Left colon (tissue), 2 donors: ENCODE measurements at regions of chr22 and their contacts with region 1.

Region 1: GRCh38 chr22:49852898-49853894 is at the start of gene ZBED4:
- DNase-seq: peak; percentile 97 to 100
- ATAC-seq: peak; percentile 85
- total RNA-seq, gene ZBED4: 16.9 to 19.5 TPM

Region 2: DNA sequence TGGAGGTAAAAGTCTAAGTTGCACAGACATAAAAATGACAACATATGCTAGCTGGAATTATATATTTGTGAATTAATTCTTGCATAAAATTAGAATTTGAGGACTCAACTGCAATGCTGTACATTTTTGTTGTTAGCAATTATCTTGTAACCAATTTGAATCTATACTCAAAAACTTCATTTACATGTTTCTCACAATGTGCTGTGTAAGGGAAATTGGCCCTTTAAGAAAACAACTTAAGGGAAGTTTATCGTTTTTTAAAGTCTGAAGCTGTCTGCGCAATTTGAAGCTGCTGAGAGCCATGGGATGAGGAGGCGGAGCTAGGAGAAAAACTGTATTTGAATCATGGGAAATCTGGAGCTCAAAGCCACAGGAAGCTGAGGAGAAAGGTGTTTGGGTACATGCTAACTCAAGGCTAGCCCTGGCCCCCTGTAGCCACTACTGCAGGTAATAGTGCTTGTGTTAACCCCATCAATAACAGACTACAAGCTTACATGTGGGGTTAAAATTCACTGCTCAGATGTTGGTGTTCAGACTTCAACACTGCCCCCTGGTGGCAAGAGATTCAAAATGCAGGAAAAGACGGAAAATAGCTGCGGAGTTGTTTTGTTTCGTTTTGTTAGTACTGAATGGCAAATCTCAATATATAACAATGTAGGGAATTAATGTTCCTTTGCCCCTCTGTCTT is 151.7 kb before region 1 on chr22:
- intact Hi-C with region 1: no loop called
- DNase-seq: no peak
- ATAC-seq: no peak

Region 3: GRCh38 chr22:49800408-49801238 is 52.6 kb before region 1 on chr22:
- intact Hi-C with region 1: no loop called
- DNase-seq: no peak
- ATAC-seq: no peak

Region 4: GRCh38 chr22:49917974-49918910 is 65.0 kb after region 1 on chr22 and contains the starts of genes ALG12 and CRELD2:
- intact Hi-C with region 1: loop called in 1 of 2 experiments (anchors 10 kb)
- DNase-seq: peak; percentile 97
- ATAC-seq: peak; percentile 92
- total RNA-seq, gene ALG12: 22.8 to 27.9 TPM
- total RNA-seq, gene CRELD2: 36.7 to 53.8 TPM

Region 5: GRCh38 chr22:50459496-50460140 is 606.4 kb after region 1 on chr22:
- intact Hi-C with region 1: no loop called
- DNase-seq: no peak
- ATAC-seq: peak; percentile 39